Sigmoid colon (tissue), 7 donors: ENCODE measurements at regions of chr1 and their contacts with region 1.

Region 1: DNA sequence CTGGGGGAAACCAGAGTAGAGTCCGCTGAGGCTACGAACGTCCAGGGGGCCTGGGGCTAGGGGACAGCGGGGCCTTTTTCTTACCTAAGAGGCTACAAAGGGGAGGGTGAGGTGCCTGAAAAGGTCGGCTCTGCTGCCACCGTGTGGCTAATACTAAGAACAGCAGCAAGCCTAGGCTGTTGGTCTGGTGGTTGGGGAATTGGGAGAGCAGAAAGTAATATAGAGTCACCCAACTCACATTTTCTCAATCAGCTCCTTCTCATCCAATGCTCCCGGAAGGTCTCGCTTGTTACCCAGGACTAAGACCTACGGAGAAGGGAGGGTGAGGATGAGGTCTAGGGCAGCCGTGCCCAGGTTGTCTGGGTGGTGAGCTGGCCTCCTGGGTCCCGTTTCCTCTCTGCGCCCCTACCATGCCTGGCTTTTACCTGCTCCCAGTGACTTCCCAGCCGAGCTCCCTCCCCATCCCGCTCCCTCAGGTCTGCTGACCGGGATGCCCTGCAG is 9.3 kb downstream of the ARL8A start:
- DNase-seq: peak; percentile 81
- H3K4me3 ChIP-seq: no peak overlapping the region
- H3K27ac ChIP-seq: peak overlapping the region; percentile 63 to 88 (median 84)
- H3K4me1 ChIP-seq: peaks cover 0 to 41% (median 28%) of the 10 kb centered on the region in 4 donors
- H3K27me3 ChIP-seq: no peaks in the 10 kb centered on the region
- CTCF ChIP-seq: peak; percentile 61 to 87 (median 80)
- EP300 ChIP-seq: no peak
- POLR2A ChIP-seq: no peak

Region 2: GRCh38 chr1:202009326-202010179 is 125.7 kb before region 1 on chr1:
- intact Hi-C with region 1: loop called (anchors 1 kb)
- DNase-seq: peak; percentile 84
- H3K4me3 ChIP-seq: no peak overlapping the region
- H3K27ac ChIP-seq: peak overlapping the region in 1 of 4 donors; percentile 33
- H3K4me1 ChIP-seq: peaks cover 0 to 4% (median 0%) of the 10 kb centered on the region in 4 donors
- H3K27me3 ChIP-seq: no peaks in the 10 kb centered on the region
- CTCF ChIP-seq: peak; percentile 51 to 93 (median 82)
- EP300 ChIP-seq: no peak
- POLR2A ChIP-seq: no peak

Region 3: DNA sequence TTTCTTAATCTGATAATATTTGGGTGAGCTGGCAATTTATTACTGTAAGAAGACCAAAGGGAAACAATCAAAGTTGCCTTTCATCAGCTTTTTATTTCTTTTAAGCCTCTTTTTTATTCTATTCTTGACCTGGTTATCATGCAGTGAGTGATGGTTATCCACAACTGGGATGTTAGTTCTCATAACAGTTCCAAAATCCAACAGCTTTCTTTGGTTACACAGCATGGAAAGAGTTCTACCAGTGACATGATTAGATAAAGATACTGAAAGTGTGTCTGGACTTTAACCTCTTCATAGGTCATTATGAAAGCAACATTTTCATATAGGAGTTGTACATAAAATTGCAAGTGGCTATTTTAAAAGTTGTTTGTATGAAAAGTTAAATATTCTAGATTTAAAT is 411.9 kb after region 1 on chr1:
- intact Hi-C with region 1: no loop called
- DNase-seq: no peak
- H3K4me3 ChIP-seq: peak overlapping the region in 3 of 4 donors; percentile 58 to 60 (median 58)
- H3K27ac ChIP-seq: peak overlapping the region; percentile 68 to 94 (median 86)
- H3K4me1 ChIP-seq: peaks cover 0 to 70% (median 53%) of the 10 kb centered on the region in 4 donors
- H3K27me3 ChIP-seq: no peaks in the 10 kb centered on the region
- CTCF ChIP-seq: no peak
- EP300 ChIP-seq: no peak
- POLR2A ChIP-seq: no peak